ENCODE measurements at regions of chr15 and their contacts with region 1.

Region 1: GRCh38 chr15:59711451-59712243 is 22.5 kb upstream of the BNIP2 start:
- DNase-seq: no peak
- ATAC-seq: no peak
- H3K4me3 ChIP-seq: no peak overlapping the region
- H3K4me3 Mint-ChIP-seq: no peak overlapping the region
- H3K27ac ChIP-seq: no peak overlapping the region
- H3K27ac Mint-ChIP-seq: no peak overlapping the region
- H3K4me1 ChIP-seq: no peaks in the 10 kb centered on the region
- H3K4me1 Mint-ChIP-seq: no peaks in the 10 kb centered on the region
- H3K27me3 ChIP-seq: no peaks in the 10 kb centered on the region
- H3K27me3 Mint-ChIP-seq: peaks cover 1% of the 10 kb centered on the region
- CTCF ChIP-seq: no peak

Region 2: GRCh38 chr15:59268168-59268979 is 443.3 kb before region 1 on chr15:
- CTCF ChIA-PET with region 1: no interaction called
- POLR2A ChIA-PET with region 1: no interaction called
- intact Hi-C with region 1: no loop called
- DNase-seq: no peak
- ATAC-seq: no peak
- H3K4me3 ChIP-seq: no peak overlapping the region
- H3K4me3 Mint-ChIP-seq: no peak overlapping the region
- H3K27ac ChIP-seq: no peak overlapping the region
- H3K27ac Mint-ChIP-seq: no peak overlapping the region
- H3K4me1 ChIP-seq: no peaks in the 10 kb centered on the region
- H3K4me1 Mint-ChIP-seq: no peaks in the 10 kb centered on the region
- H3K27me3 ChIP-seq: no peaks in the 10 kb centered on the region
- H3K27me3 Mint-ChIP-seq: peaks cover 5% of the 10 kb centered on the region
- CTCF ChIP-seq: no peak

Region 3: GRCh38 chr15:59678620-59679019 is 33.0 kb before region 1 on chr15:
- CTCF ChIA-PET with region 1: no interaction called
- POLR2A ChIA-PET with region 1: no interaction called
- intact Hi-C with region 1: loop called in 1 of 2 experiments (anchors 1 kb)
- DNase-seq: no peak
- ATAC-seq: no peak
- H3K4me3 ChIP-seq: no peak overlapping the region
- H3K4me3 Mint-ChIP-seq: no peak overlapping the region
- H3K27ac ChIP-seq: no peak overlapping the region
- H3K27ac Mint-ChIP-seq: no peak overlapping the region
- H3K4me1 ChIP-seq: no peaks in the 10 kb centered on the region
- H3K4me1 Mint-ChIP-seq: peaks cover 10% of the 10 kb centered on the region
- H3K27me3 ChIP-seq: no peaks in the 10 kb centered on the region
- H3K27me3 Mint-ChIP-seq: no peaks in the 10 kb centered on the region
- CTCF ChIP-seq: no peak